ENCODE measurements at regions of chr12 and their contacts with region 1.

Region 1: DNA sequence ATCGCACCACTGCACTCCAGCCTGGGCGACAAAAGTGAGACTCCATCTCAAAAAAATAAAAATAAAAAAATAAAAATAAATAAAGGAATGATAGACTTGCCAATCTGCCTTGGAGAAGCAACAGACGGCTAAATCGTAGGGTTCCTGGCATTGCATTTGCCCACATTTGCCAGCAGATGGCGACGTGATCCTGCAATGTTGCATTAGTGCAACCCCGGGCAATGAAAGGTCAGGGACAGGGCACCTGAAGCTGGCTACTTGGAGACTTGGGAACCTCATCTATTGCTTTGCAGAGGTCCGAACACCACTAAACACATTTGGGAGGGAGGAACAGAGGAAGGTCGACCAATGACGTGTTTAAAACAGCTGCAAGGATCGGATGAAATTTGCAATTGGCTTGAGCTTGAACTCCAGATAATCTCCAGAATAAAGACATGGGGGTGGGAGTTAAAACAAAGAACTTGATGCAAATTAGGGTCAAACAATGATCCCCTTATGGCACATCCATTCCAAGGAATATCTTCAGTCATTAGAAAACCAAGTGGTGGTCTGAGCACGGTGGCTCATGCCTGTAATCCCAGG is 34.6 kb downstream of the SPRING1 start:
- DNase-seq: peak; percentile 76
- H3K4me3 ChIP-seq: no peak overlapping the region
- H3K27ac ChIP-seq: no peak overlapping the region
- H3K4me1 ChIP-seq: no peaks in the 10 kb centered on the region
- H3K27me3 ChIP-seq: no peaks in the 10 kb centered on the region
- CTCF ChIP-seq: peak; percentile 95

Region 2: GRCh38 chr12:116277393-116278278 is 425.7 kb before region 1 on chr12 and contains the start of gene MED13L:
- intact Hi-C with region 1: no loop called
- DNase-seq: peak; percentile 84
- H3K4me3 ChIP-seq: peak within 1 kb of the TSS; percentile 60
- H3K27ac ChIP-seq: peak within 1 kb of the TSS; percentile 87
- H3K4me1 ChIP-seq: peaks cover 6% of the 10 kb centered on the region
- H3K27me3 ChIP-seq: no peaks in the 10 kb centered on the region
- CTCF ChIP-seq: no peak
- total RNA-seq, gene MED13L: 73.8 to 92.6 TPM

Region 3: GRCh38 chr12:116955382-116956021 is 252.2 kb after region 1 on chr12:
- intact Hi-C with region 1: loop called (anchors 5 kb)
- DNase-seq: peak; percentile 39
- H3K4me3 ChIP-seq: no peak overlapping the region
- H3K27ac ChIP-seq: no peak overlapping the region
- H3K4me1 ChIP-seq: no peaks in the 10 kb centered on the region
- H3K27me3 ChIP-seq: no peaks in the 10 kb centered on the region
- CTCF ChIP-seq: no peak

Region 4: GRCh38 chr12:117119592-117120198 is 416.4 kb after region 1 on chr12:
- intact Hi-C with region 1: loop called (anchors 10 kb)
- DNase-seq: peak; percentile 38
- H3K4me3 ChIP-seq: no peak overlapping the region
- H3K27ac ChIP-seq: no peak overlapping the region
- H3K4me1 ChIP-seq: no peaks in the 10 kb centered on the region
- H3K27me3 ChIP-seq: no peaks in the 10 kb centered on the region
- CTCF ChIP-seq: peak; percentile 64